ENCODE measurements at regions of chr15 and their contacts with region 1.

Region 1: GRCh38 chr15:43225201-43225949 is 4.6 kb upstream of the EPB42 start:
- DNase-seq: peak; percentile 67
- ATAC-seq: peak; percentile 96
- H3K4me3 Mint-ChIP-seq: no peak overlapping the region
- H3K27ac Mint-ChIP-seq: no peak overlapping the region
- H3K4me1 Mint-ChIP-seq: peaks cover 7% of the 10 kb centered on the region
- H3K27me3 Mint-ChIP-seq: peaks cover 5% of the 10 kb centered on the region
- CTCF ChIP-seq: peak; percentile 82

Region 2: GRCh38 chr15:43204016-43204901 is 21.1 kb before region 1 on chr15:
- CTCF ChIA-PET with region 1: interaction called, 13 read pairs
- POLR2A ChIA-PET with region 1: no interaction called
- intact Hi-C with region 1: no loop called
- DNase-seq: peak; percentile 83
- ATAC-seq: peak; percentile 86
- H3K4me3 Mint-ChIP-seq: no peak overlapping the region
- H3K27ac Mint-ChIP-seq: no peak overlapping the region
- H3K4me1 Mint-ChIP-seq: peaks cover 8% of the 10 kb centered on the region
- H3K27me3 Mint-ChIP-seq: peaks cover 6% of the 10 kb centered on the region
- CTCF ChIP-seq: peak; percentile 65

Region 3: GRCh38 chr15:43253431-43254403 is 28.3 kb after region 1 on chr15:
- CTCF ChIA-PET with region 1: interaction called, 17 read pairs
- POLR2A ChIA-PET with region 1: no interaction called
- intact Hi-C with region 1: no loop called
- DNase-seq: peak; percentile 71
- ATAC-seq: peak; percentile 55
- H3K4me3 Mint-ChIP-seq: no peak overlapping the region
- H3K27ac Mint-ChIP-seq: peak overlapping the region; percentile 70
- H3K4me1 Mint-ChIP-seq: peaks cover 48% of the 10 kb centered on the region
- H3K27me3 Mint-ChIP-seq: no peaks in the 10 kb centered on the region
- CTCF ChIP-seq: no peak

Region 4: DNA sequence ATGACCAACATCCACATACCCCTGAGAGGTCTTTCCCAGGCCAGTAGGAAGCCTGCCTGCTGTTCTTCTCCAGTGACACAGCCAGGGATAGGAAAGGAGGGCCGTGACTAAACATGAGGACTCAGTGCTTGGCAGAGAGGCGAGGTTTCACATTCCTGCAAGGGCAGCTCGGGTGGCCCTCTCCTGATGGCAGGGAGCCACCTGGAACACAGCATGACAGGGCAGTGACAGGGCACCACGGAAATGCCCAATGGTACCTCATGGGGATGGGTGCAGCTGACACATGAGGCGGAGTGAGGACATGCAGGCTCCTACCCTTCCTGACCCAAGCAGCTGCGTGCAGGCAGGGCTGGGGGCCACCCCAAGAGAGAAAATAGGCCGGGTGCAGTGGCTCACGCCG is 48.8 kb after region 1 on chr15:
- CTCF ChIA-PET with region 1: interaction called, 91 read pairs
- POLR2A ChIA-PET with region 1: no interaction called
- intact Hi-C with region 1: no loop called
- DNase-seq: no peak
- ATAC-seq: no peak
- H3K4me3 Mint-ChIP-seq: no peak overlapping the region
- H3K27ac Mint-ChIP-seq: no peak overlapping the region
- H3K4me1 Mint-ChIP-seq: no peaks in the 10 kb centered on the region
- H3K27me3 Mint-ChIP-seq: peaks cover 6% of the 10 kb centered on the region
- CTCF ChIP-seq: no peak

Region 5: DNA sequence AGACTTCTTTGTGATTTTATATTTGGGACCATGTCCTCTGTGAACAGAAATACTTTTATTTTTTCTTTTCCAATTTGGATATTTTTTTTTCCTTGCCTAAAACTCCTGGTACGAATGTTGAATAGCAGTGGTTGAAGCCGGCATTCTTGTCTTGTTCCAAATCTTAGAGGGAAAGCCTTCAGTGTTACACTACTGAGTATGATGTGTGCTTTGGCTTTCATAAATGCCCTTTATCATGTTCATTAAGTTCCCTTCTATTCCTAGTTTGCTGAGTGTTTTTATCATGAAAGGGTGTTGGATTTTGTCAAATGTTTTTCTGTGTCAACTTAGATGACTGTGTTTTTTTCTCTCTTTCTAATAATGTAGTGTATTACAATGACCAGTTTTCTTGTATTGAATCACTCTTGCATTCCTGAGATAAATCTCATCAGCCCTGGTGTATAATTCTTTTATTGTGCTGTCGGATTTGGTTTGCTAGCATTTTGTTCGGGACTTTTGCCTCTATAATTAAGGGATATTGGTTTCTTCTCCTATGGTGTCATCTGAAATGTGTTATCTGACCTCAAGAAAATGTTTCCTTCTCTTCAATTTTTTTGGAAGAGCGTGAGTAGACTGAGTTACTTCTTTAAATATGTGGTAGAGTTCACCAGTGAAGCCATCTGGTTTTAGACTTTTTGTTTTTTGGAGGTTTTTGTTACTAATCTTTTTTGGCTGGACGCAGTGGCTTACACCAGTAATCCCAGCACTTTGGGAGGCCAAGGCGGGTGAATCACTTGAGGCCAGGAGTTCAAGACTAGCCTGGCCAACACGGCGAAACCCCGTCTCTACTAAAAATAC is 325.4 kb after region 1 on chr15:
- CTCF ChIA-PET with region 1: no interaction called
- POLR2A ChIA-PET with region 1: no interaction called
- intact Hi-C with region 1: no loop called
- DNase-seq: no peak
- ATAC-seq: no peak
- H3K4me3 Mint-ChIP-seq: no peak overlapping the region
- H3K27ac Mint-ChIP-seq: no peak overlapping the region
- H3K4me1 Mint-ChIP-seq: no peaks in the 10 kb centered on the region
- H3K27me3 Mint-ChIP-seq: no peaks in the 10 kb centered on the region
- CTCF ChIP-seq: no peak

Measured in activated CD8-positive, alpha-beta T cell treated with anti-CD3 and anti-CD28 coated beads for 36 hours (primary cell).